RWPE1 (cell line): ENCODE measurements at regions of chr13 and their contacts with region 1.

Region 1: GRCh38 chr13:85638815-85639393 is 160.3 kb downstream of the SLITRK6 start:
- DNase-seq: no peak
- H3K27ac ChIP-seq: no peak overlapping the region
- CTCF ChIP-seq: no peak

Region 2: GRCh38 chr13:85659493-85659892 is 20.6 kb after region 1 on chr13:
- CTCF ChIA-PET with region 1: interaction called, 3 read pairs
- POLR2A ChIA-PET with region 1: interaction called, 17 read pairs
- DNase-seq: peak; percentile 14
- H3K27ac ChIP-seq: no peak overlapping the region
- CTCF ChIP-seq: no peak